CD8-positive, alpha-beta memory T cell (primary cell): ENCODE measurements at regions of chr1 and their contacts with region 1.

Region 1: GRCh38 chr1:167491586-167492461 is 26.5 kb downstream of the CD247 start:
- DNase-seq: peak in 1 of 5 donors; percentile 37
- H3K4me3 ChIP-seq: peak overlapping the region; percentile 23
- H3K4me3 Mint-ChIP-seq: peak overlapping the region; percentile 60 to 89 (median 70)
- H3K27ac ChIP-seq: no peak overlapping the region
- H3K27ac Mint-ChIP-seq: peak overlapping the region; percentile 82 to 97 (median 94)
- H3K4me1 ChIP-seq: peaks cover 98% of the 10 kb centered on the region
- H3K4me1 Mint-ChIP-seq: peaks cover 91 to 100% (median 99%) of the 10 kb centered on the region in 3 donors
- H3K27me3 ChIP-seq: no peaks in the 10 kb centered on the region
- H3K27me3 Mint-ChIP-seq: no peaks in the 10 kb centered on the region

Region 2: GRCh38 chr1:167420510-167420909 is 71.3 kb before region 1 on chr1:
- CTCF ChIA-PET with region 1: no interaction called
- POLR2A ChIA-PET with region 1: interaction called, 14 read pairs
- DNase-seq: no peak
- H3K4me3 ChIP-seq: no peak overlapping the region
- H3K4me3 Mint-ChIP-seq: no peak overlapping the region
- H3K27ac ChIP-seq: no peak overlapping the region
- H3K27ac Mint-ChIP-seq: no peak overlapping the region
- H3K4me1 ChIP-seq: no peaks in the 10 kb centered on the region
- H3K4me1 Mint-ChIP-seq: peaks cover 0 to 11% (median 0%) of the 10 kb centered on the region in 3 donors
- H3K27me3 ChIP-seq: no peaks in the 10 kb centered on the region
- H3K27me3 Mint-ChIP-seq: no peaks in the 10 kb centered on the region